ENCODE measurements at regions of chr17 and their contacts with region 1.

Region 1: DNA sequence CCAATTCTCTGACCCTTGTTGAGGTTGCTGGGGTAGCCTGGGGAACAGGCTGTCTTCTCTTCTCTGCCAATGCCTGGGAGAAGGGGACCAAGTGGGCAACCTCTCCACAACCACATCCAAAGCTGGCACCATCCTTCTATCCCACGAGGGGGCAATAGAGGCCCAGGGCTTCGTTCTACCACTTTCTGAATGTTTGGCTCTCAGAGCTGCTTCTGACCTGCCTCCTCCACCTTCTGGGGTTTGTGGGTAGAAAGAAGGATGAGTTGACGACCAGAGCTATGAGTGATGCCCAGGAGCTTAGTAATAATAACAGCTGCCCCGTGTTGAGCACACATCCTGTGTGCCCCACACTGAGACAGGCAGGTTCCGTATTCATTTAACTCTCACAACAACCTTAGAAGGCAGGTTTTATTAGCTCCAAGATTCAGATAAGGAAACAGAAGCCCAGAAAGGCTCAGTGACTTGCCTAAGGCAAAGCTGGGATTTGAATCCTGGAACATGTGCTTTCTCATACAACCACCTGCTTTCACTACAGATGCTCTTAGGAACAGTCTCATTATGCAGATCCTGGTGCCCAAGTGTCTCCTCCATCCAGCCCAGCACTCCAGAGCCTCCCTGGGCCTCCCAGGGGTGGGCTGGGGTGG is 11.1 kb downstream of the TSPOAP1 start:
- DNase-seq: peak; percentile 88
- H3K4me3 Mint-ChIP-seq: no peak overlapping the region
- H3K27ac Mint-ChIP-seq: peak overlapping the region; percentile 81
- H3K4me1 Mint-ChIP-seq: peaks cover 11% of the 10 kb centered on the region
- H3K27me3 Mint-ChIP-seq: no peaks in the 10 kb centered on the region

Region 2: GRCh38 chr17:58172369-58173071 is 145.0 kb before region 1 on chr17:
- CTCF ChIA-PET with region 1: no interaction called
- intact Hi-C with region 1: no loop called
- DNase-seq: peak; percentile 70
- H3K4me3 Mint-ChIP-seq: no peak overlapping the region
- H3K27ac Mint-ChIP-seq: no peak overlapping the region
- H3K4me1 Mint-ChIP-seq: peaks cover 33% of the 10 kb centered on the region
- H3K27me3 Mint-ChIP-seq: no peaks in the 10 kb centered on the region

Region 3: GRCh38 chr17:58249270-58250133 is 68.0 kb before region 1 on chr17:
- CTCF ChIA-PET with region 1: interaction called, 11 read pairs
- intact Hi-C with region 1: loop called (anchors 2 kb)
- DNase-seq: peak; percentile 82
- H3K4me3 Mint-ChIP-seq: peak overlapping the region; percentile 72
- H3K27ac Mint-ChIP-seq: no peak overlapping the region
- H3K4me1 Mint-ChIP-seq: peaks cover 11% of the 10 kb centered on the region
- H3K27me3 Mint-ChIP-seq: peaks cover 3% of the 10 kb centered on the region

Region 4: GRCh38 chr17:58329035-58329809 is 11.7 kb after region 1 on chr17:
- CTCF ChIA-PET with region 1: interaction called, 32 read pairs
- intact Hi-C with region 1: loop called (anchors 1 kb)
- DNase-seq: peak; percentile 91
- H3K4me3 Mint-ChIP-seq: peak overlapping the region; percentile 92
- H3K27ac Mint-ChIP-seq: peak overlapping the region; percentile 99
- H3K4me1 Mint-ChIP-seq: peaks cover 40% of the 10 kb centered on the region
- H3K27me3 Mint-ChIP-seq: peaks cover 14% of the 10 kb centered on the region

Region 5: GRCh38 chr17:58344047-58344790 is 26.7 kb after region 1 on chr17:
- CTCF ChIA-PET with region 1: interaction called, 92 read pairs
- intact Hi-C with region 1: loop called (anchors 1 kb)
- DNase-seq: peak; percentile 98
- H3K4me3 Mint-ChIP-seq: peak overlapping the region; percentile 92
- H3K27ac Mint-ChIP-seq: peak overlapping the region; percentile 99
- H3K4me1 Mint-ChIP-seq: peaks cover 60% of the 10 kb centered on the region
- H3K27me3 Mint-ChIP-seq: no peaks in the 10 kb centered on the region

Region 6: DNA sequence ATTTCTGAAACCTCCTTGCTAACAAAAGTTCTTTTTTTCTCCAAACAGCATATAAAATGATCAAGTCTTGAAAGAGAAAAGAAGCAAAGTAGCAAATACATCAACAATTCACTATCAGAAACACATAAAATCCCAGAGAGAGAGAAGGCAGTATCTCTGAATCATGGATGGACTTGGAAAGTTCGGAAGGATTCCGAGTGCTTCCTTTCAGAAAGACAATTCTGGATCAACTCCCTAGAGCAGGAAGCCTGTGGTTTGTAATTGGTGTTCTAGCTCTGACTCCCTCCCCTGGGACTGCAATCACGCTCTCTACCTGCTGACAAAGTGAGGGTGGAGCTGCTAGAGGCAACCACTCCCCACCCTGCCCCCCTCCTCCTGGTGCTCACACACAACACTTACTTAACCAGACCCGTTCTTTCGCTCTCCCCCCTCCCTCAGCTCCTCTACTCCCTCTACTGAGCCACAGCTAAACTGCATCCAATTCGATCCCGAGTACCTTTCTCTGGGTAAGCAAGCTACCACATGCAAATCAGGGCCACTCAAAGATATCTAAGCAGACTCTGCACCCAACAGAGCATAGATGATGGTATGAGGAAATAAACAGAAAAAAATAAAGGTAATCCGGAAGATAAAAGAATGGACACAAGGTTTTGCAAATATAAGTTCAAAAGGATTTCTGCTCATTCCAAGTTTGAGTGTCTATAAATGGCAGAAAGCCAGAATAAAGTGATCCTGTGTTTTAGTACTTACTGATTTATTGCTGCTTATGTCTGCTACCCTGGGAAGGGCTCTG is 100.0 kb after region 1 on chr17 and contains the start of gene RNF43:
- CTCF ChIA-PET with region 1: interaction called, 70 read pairs
- intact Hi-C with region 1: loop called (anchors 1 kb)
- DNase-seq: peak; percentile 95
- H3K4me3 Mint-ChIP-seq: peak within 1 kb of the TSS; percentile 41
- H3K27ac Mint-ChIP-seq: peak within 1 kb of the TSS; percentile 18
- H3K4me1 Mint-ChIP-seq: peaks cover 18% of the 10 kb centered on the region
- H3K27me3 Mint-ChIP-seq: no peaks in the 10 kb centered on the region
- total RNA-seq, gene RNF43: 0.38 to 0.91 TPM

Region 7: GRCh38 chr17:58447039-58447975 is 129.8 kb after region 1 on chr17:
- CTCF ChIA-PET with region 1: interaction called, 36 read pairs
- intact Hi-C with region 1: loop called (anchors 1 kb)
- DNase-seq: peak; percentile 86
- H3K4me3 Mint-ChIP-seq: no peak overlapping the region
- H3K27ac Mint-ChIP-seq: no peak overlapping the region
- H3K4me1 Mint-ChIP-seq: peaks cover 1% of the 10 kb centered on the region
- H3K27me3 Mint-ChIP-seq: no peaks in the 10 kb centered on the region